Sciatic nerve (tissue), 2 donors: ENCODE measurements at regions of chr4 and their contacts with region 1.

Region 1: DNA sequence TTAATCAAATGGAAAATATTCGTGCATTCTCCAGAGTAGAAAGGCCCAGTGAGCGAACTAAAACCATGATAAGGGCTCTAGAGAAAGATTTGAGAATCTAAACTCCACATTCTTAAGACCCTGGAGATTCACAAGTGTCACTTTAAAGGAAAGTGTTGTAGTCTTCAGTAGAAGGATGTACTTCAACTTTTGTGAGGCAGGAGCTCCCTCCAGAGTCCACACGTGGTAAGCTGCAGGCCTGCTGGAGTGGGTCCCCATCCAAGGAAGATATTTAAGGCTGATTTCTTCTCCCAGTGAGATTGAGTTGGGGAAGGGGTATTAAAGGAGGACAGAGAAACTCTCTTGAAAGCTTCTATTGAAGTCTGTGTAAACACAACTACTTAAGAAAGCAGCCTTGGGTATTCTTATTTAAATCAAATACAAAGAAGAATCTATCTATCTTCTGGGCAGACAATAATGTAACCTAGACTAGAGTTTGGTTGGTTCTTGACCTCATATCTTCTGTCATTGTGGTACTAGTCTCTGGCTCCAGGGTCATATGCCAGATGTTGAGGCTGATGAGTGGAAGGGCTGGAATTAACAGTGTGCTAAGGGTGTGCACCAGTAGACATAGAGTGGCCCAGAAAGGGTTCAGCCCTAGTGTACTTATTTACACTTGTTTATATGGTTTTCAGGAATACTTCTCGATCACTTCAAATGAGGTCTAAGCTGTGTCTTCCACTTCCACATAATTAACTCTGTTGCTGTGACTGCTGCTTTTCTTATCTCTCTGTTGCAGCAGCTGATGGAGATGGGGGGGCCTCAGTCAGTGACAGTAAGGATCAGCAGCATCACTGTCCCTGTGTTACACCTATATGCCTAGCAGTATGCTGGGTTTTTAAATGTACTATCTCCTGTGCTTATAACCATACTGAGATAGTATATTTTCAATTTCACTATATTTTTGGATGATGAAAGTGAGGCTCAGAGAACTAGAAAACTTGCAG is 76.1 kb downstream of the HMGB2 start:
- DNase-seq: peak; percentile 68
- ATAC-seq: peak; percentile 92

Region 2: DNA sequence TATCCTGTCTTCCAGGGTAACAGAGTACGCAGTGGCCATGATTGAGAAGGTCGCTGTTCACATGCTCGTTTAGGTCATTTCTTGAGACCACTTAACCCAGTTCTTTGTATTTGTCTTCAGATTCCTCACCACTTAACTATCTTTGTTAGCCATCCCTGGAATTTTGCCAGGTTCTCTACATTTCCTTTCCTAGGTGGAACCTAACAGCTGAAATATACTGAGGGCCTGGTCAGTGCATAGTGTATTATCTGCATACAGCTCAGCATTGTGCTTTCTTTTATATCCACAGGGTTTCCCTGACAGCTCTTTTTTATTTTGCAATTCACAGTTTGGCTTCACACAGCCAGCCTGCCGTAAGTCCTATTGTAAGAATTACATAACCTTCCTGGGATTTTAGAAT is 238.3 kb before region 1 on chr4:
- intact Hi-C with region 1: loop called (anchors 5 kb)
- DNase-seq: no peak
- ATAC-seq: no peak